ENCODE measurements at regions of chr16 and their contacts with region 1.

Region 1: GRCh38 chr16:30984669-30985400 is at the start of gene HSD3B7:
- DNase-seq: peak; percentile 64 to 87 (median 78)
- ATAC-seq: peak; percentile 74
- H3K4me3 ChIP-seq: no peak within 1 kb of the TSS
- H3K4me3 Mint-ChIP-seq: no peak within 1 kb of the TSS
- H3K27ac ChIP-seq: no peak within 1 kb of the TSS
- H3K27ac Mint-ChIP-seq: no peak within 1 kb of the TSS
- H3K4me1 ChIP-seq: peaks cover 13% of the 10 kb centered on the region
- H3K4me1 Mint-ChIP-seq: no peaks in the 10 kb centered on the region
- H3K27me3 ChIP-seq: no peaks in the 10 kb centered on the region
- H3K27me3 Mint-ChIP-seq: no peaks in the 10 kb centered on the region
- CTCF ChIP-seq: peak; percentile 85
- total RNA-seq, gene HSD3B7: 0.11 TPM in 1 of 2 experiments, not detected in the other

Region 2: DNA sequence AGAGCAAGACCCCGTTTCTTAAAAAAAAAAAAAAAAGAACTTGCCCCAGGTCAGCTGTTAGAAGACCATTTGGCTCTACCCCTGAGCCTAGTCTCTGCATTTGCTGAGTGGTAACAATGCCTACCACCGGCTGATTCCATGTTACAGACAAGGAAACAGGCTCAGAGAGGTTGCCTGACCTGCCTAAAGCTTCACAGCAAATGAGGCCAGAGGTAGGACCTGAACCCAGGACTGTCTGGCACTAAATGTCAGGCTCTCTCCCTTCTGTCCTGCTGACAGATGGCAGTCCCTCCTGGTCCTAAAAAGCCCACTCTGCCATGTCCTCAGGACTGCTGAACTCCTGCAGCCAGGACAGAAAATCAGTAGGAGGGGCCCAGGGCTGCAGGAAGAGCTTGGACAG is 19.8 kb after region 1 on chr16:
- CTCF ChIA-PET with region 1: no interaction called
- POLR2A ChIA-PET with region 1: no interaction called
- intact Hi-C with region 1: no loop called
- DNase-seq: no peak
- ATAC-seq: no peak
- H3K4me3 ChIP-seq: no peak overlapping the region
- H3K4me3 Mint-ChIP-seq: no peak overlapping the region
- H3K27ac ChIP-seq: no peak overlapping the region
- H3K27ac Mint-ChIP-seq: no peak overlapping the region
- H3K4me1 ChIP-seq: no peaks in the 10 kb centered on the region
- H3K4me1 Mint-ChIP-seq: peaks cover 2% of the 10 kb centered on the region
- H3K27me3 ChIP-seq: no peaks in the 10 kb centered on the region
- H3K27me3 Mint-ChIP-seq: no peaks in the 10 kb centered on the region
- CTCF ChIP-seq: no peak

Region 3: DNA sequence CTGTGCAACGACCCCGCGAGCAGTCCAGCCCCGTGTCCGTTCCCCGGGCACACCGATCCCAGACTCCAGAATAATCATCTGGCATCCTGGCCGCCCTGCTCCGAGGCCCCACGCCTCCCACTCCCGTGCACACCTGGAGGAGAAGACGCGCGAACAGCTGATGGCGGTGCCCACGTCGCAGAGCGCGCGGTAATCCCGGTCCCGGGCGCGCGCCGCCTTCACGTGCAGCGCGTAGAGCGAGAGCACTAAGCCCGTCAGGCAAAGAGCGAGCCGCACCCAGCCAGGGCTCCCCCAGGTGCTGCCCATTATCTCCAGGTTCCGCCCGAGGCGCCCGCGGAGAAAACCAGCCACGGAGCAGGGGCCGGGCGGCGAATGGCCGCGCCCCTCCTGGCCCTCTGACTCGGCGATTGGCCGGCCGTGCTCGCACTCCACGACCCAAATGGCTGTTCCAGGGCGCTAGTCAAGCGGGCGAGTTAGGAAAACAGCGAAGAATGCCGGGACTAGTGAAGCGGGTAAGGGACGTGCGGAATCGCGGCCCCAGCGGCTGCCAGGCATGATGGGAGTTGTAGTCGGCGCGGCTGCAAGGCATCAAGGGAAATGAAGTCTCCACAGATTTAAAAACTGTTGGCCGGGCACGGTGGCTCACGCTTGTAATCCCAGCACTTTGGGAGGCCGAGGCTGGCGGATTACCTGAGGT is 109.7 kb after region 1 on chr16 and contains the start of gene VKORC1:
- CTCF ChIA-PET with region 1: interaction called, 8 read pairs
- POLR2A ChIA-PET with region 1: interaction called, 4 read pairs
- intact Hi-C with region 1: loop called (anchors 1 kb)
- DNase-seq: peak; percentile 75 to 95 (median 82)
- ATAC-seq: peak; percentile 90
- H3K4me3 ChIP-seq: peak within 1 kb of the TSS; percentile 82
- H3K4me3 Mint-ChIP-seq: peak within 1 kb of the TSS; percentile 93
- H3K27ac ChIP-seq: peak within 1 kb of the TSS; percentile 84
- H3K27ac Mint-ChIP-seq: peak within 1 kb of the TSS; percentile 83
- H3K4me1 ChIP-seq: peaks cover 31% of the 10 kb centered on the region
- H3K4me1 Mint-ChIP-seq: peaks cover 34% of the 10 kb centered on the region
- H3K27me3 ChIP-seq: no peaks in the 10 kb centered on the region
- H3K27me3 Mint-ChIP-seq: no peaks in the 10 kb centered on the region
- CTCF ChIP-seq: no peak
- total RNA-seq, gene VKORC1: 19.0 to 19.2 TPM

Region 4: DNA sequence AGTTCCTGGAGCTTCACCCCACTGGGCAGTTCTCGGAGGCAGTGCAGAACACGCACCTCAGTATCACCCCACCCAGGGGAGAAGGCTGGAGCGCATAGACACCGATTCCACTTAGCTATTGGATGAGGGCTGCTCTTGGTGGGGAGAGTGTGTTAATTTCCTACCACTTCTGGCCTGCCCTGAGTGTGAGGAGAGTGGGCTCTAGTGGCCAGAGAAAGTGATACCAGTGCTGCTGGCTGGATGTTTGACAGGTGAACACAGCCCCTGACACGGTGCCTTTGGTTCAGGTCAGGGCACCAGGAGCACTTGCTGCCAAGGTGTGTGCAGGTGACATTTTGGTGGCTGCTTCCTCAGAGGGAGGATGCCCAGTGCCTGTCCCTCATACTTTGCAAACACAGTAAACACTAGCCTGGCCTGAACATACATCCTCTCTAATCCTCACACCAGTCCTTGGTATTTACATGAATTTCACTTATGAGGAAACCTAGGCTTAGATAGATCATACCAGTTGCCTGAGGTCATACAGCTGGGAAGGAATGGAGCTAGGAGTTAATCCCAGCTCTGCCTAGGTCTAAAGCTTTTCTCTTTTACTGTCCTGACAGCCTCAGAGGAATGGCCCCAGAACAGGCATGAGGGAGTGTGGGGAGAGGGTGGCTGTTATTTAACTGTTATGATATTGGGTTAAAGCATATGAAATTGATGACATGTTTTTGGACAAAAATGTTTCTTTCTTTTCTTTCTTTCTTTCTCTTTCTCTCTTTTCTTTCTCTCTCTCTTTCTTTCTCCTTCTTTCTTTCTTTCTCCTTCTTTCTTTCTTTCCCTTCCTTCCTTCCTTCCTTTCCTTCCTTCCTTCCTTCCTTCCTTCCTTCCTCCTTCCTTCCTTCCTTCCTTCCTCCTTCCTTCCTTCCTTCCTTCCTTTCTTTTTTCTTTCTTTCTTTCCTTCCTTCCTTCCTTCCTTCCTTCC is 349.1 kb after region 1 on chr16:
- CTCF ChIA-PET with region 1: no interaction called
- POLR2A ChIA-PET with region 1: no interaction called
- intact Hi-C with region 1: loop called in 1 of 2 experiments (anchors 10 kb)
- DNase-seq: peak in 5 of 14 experiments; percentile 24 to 58 (median 49)
- ATAC-seq: peak; percentile 66
- H3K4me3 ChIP-seq: no peak overlapping the region
- H3K4me3 Mint-ChIP-seq: peak overlapping the region; percentile 2
- H3K27ac ChIP-seq: no peak overlapping the region
- H3K27ac Mint-ChIP-seq: no peak overlapping the region
- H3K4me1 ChIP-seq: peaks cover 16% of the 10 kb centered on the region
- H3K4me1 Mint-ChIP-seq: peaks cover 25% of the 10 kb centered on the region
- H3K27me3 ChIP-seq: peaks cover 0 to 11% of the 10 kb centered on the region in 2 experiments
- H3K27me3 Mint-ChIP-seq: peaks cover 24% of the 10 kb centered on the region
- CTCF ChIP-seq: peak; percentile 32

Region 5: DNA sequence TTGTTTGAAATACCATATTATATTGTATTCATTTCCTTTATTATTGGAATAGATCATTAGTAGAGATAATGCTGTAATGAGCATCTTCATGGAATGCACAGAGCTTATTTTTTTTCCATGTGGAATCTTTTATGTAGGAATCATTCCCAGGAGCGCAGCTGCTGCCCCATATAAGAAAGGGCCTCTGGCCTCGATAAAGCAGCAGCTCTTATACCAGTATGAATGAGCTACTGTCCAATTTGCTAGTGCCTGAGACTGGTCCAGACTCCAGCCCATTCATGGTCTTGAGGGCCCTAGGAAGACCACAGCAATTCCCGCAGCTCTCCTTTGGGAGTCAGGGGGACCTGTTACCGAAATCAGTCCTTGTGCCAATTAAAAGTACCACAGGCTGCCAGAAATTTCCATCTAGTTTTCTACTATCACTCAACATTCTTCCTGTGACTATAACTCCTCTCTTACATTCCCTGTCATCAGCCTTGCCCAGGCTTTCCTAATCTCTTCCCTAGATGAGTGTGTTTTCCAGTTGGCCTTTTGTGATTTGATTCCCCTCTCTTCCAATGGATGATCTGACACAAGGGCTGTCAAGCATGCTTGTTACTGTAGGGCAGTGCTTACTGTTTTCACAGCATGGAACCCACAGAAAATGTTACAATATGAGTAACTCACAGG is 455.8 kb after region 1 on chr16:
- CTCF ChIA-PET with region 1: interaction called, 3 read pairs
- POLR2A ChIA-PET with region 1: no interaction called
- intact Hi-C with region 1: loop called in 1 of 2 experiments (anchors 1 kb)
- DNase-seq: no peak
- ATAC-seq: no peak
- H3K4me3 ChIP-seq: no peak overlapping the region
- H3K4me3 Mint-ChIP-seq: peak overlapping the region; percentile 1
- H3K27ac ChIP-seq: no peak overlapping the region
- H3K27ac Mint-ChIP-seq: no peak overlapping the region
- H3K4me1 ChIP-seq: peaks cover 14% of the 10 kb centered on the region
- H3K4me1 Mint-ChIP-seq: peaks cover 10% of the 10 kb centered on the region
- H3K27me3 ChIP-seq: no peaks in the 10 kb centered on the region
- H3K27me3 Mint-ChIP-seq: no peaks in the 10 kb centered on the region
- CTCF ChIP-seq: no peak